B cell (primary cell): ENCODE measurements at regions of chr7 and their contacts with region 1.

Region 1: DNA sequence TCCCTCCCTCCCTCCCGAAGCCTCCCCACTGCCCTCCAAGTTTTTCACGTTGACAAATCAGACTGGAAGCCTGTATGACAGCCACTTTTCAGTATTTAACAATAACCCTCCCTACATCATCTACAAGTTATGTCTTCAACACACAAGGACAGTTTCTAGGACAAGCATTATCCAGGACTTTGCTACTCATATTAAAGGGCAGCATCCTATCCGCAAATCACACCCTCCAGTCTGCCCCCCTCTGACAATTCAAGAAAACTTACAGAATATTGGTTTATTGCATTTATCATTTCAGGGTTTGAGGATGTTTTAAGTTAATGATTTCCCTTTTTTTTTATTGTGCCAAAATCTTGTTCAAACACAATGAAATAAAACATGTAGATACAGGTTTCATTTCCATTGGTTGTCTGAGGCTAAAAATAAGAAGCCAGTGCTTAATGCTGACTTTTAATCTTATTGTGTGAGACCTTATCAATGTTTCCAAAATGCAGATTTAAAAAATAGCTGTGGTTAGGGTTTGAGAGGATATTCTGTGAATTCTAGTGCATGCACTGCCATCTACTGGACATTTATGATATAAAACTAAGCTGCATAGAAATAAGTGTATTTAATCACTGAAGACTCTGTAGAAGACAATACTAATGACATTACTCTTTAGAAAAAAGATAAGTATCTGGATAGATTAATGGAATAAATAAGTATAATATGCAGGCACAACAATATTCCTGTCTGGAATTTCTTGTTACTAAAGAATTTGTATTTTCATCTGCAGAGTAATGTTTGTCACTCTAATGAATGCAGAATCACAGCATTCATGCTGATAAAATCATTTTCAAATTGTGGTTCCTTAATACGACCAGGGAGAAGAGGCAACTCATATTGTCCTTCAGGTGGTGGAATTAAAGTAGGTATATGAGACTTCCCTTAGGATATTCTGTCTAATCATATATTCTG is 64.1 kb downstream of the CAV1 start:
- DNase-seq: peak; percentile 66
- ATAC-seq: peak; percentile 60
- H3K4me3 ChIP-seq: no peak overlapping the region
- H3K4me3 Mint-ChIP-seq: no peak overlapping the region
- H3K27ac ChIP-seq: no peak overlapping the region
- H3K27ac Mint-ChIP-seq: no peak overlapping the region
- H3K4me1 ChIP-seq: peaks cover 12 to 19% of the 10 kb centered on the region in 2 donors
- H3K4me1 Mint-ChIP-seq: peaks cover 19% of the 10 kb centered on the region
- H3K27me3 ChIP-seq: peaks cover 0 to 18% (median 16%) of the 10 kb centered on the region in 4 experiments
- H3K27me3 Mint-ChIP-seq: peaks cover 19% of the 10 kb centered on the region
- CTCF ChIP-seq: peak; percentile 91

Region 2: GRCh38 chr7:116173051-116174028 is 415.6 kb before region 1 on chr7:
- CTCF ChIA-PET with region 1: interaction called, 64 read pairs
- POLR2A ChIA-PET with region 1: no interaction called
- intact Hi-C with region 1: loop called (anchors 1 kb)
- DNase-seq: peak; percentile 74
- ATAC-seq: peak; percentile 61
- H3K4me3 ChIP-seq: no peak overlapping the region
- H3K4me3 Mint-ChIP-seq: no peak overlapping the region
- H3K27ac ChIP-seq: no peak overlapping the region
- H3K27ac Mint-ChIP-seq: no peak overlapping the region
- H3K4me1 ChIP-seq: no peaks in the 10 kb centered on the region
- H3K4me1 Mint-ChIP-seq: peaks cover 2% of the 10 kb centered on the region
- H3K27me3 ChIP-seq: no peaks in the 10 kb centered on the region
- H3K27me3 Mint-ChIP-seq: no peaks in the 10 kb centered on the region
- CTCF ChIP-seq: peak; percentile 82

Region 3: DNA sequence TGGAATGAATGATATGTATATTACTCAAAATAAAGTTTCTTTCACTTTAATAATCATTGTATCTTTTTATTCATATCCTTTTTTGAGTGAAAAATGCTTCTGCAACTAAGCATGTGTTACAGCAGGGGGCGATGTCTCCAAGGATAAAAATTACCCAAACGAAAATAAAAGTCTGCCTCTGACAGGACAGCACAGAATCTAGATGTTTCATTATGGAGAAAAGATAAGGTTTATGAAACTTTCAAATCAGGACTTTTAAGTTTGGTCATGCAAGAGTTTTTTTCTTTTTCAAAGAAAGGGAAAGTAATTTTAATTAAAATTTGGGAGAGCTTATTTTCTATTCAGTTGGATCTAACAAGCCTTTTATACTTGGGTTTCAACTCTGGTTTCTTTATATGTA is 330.2 kb before region 1 on chr7:
- CTCF ChIA-PET with region 1: interaction called, 180 read pairs
- POLR2A ChIA-PET with region 1: no interaction called
- intact Hi-C with region 1: loop called (anchors 1 kb)
- DNase-seq: peak; percentile 63
- ATAC-seq: peak; percentile 51
- H3K4me3 ChIP-seq: no peak overlapping the region
- H3K4me3 Mint-ChIP-seq: no peak overlapping the region
- H3K27ac ChIP-seq: no peak overlapping the region
- H3K27ac Mint-ChIP-seq: no peak overlapping the region
- H3K4me1 ChIP-seq: no peaks in the 10 kb centered on the region
- H3K4me1 Mint-ChIP-seq: peaks cover 2% of the 10 kb centered on the region
- H3K27me3 ChIP-seq: no peaks in the 10 kb centered on the region
- H3K27me3 Mint-ChIP-seq: no peaks in the 10 kb centered on the region
- CTCF ChIP-seq: peak; percentile 86

Region 4: GRCh38 chr7:116277070-116277469 is 311.8 kb before region 1 on chr7:
- CTCF ChIA-PET with region 1: no interaction called
- POLR2A ChIA-PET with region 1: no interaction called
- intact Hi-C with region 1: no loop called
- DNase-seq: no peak
- ATAC-seq: no peak
- H3K4me3 ChIP-seq: no peak overlapping the region
- H3K4me3 Mint-ChIP-seq: no peak overlapping the region
- H3K27ac ChIP-seq: no peak overlapping the region
- H3K27ac Mint-ChIP-seq: no peak overlapping the region
- H3K4me1 ChIP-seq: no peaks in the 10 kb centered on the region
- H3K4me1 Mint-ChIP-seq: no peaks in the 10 kb centered on the region
- H3K27me3 ChIP-seq: no peaks in the 10 kb centered on the region
- H3K27me3 Mint-ChIP-seq: peaks cover 8% of the 10 kb centered on the region
- CTCF ChIP-seq: no peak

Region 5: GRCh38 chr7:116576350-116577319 is 12.3 kb before region 1 on chr7:
- CTCF ChIA-PET with region 1: interaction called, 30 read pairs
- POLR2A ChIA-PET with region 1: no interaction called
- intact Hi-C with region 1: no loop called
- DNase-seq: no peak
- ATAC-seq: no peak
- H3K4me3 ChIP-seq: no peak overlapping the region
- H3K4me3 Mint-ChIP-seq: no peak overlapping the region
- H3K27ac ChIP-seq: no peak overlapping the region
- H3K27ac Mint-ChIP-seq: no peak overlapping the region
- H3K4me1 ChIP-seq: peaks cover 12 to 14% of the 10 kb centered on the region in 2 donors
- H3K4me1 Mint-ChIP-seq: peaks cover 16% of the 10 kb centered on the region
- H3K27me3 ChIP-seq: peaks cover 0 to 2% (median 0%) of the 10 kb centered on the region in 4 experiments
- H3K27me3 Mint-ChIP-seq: peaks cover 4% of the 10 kb centered on the region
- CTCF ChIP-seq: no peak

Region 6: GRCh38 chr7:116671681-116672595 is 83.0 kb after region 1 on chr7 and contains the start of gene MET:
- CTCF ChIA-PET with region 1: interaction called, 17 read pairs
- POLR2A ChIA-PET with region 1: no interaction called
- intact Hi-C with region 1: loop called (anchors 5 kb)
- DNase-seq: peak; percentile 71
- ATAC-seq: peak; percentile 83
- H3K4me3 ChIP-seq: peak within 1 kb of the TSS; percentile 28 to 54 (median 39)
- H3K4me3 Mint-ChIP-seq: peak within 1 kb of the TSS; percentile 82
- H3K27ac ChIP-seq: no peak within 1 kb of the TSS
- H3K27ac Mint-ChIP-seq: no peak within 1 kb of the TSS
- H3K4me1 ChIP-seq: peaks cover 14 to 15% of the 10 kb centered on the region in 2 donors
- H3K4me1 Mint-ChIP-seq: peaks cover 18% of the 10 kb centered on the region
- H3K27me3 ChIP-seq: peaks cover 0 to 52% (median 47%) of the 10 kb centered on the region in 4 experiments
- H3K27me3 Mint-ChIP-seq: peaks cover 69% of the 10 kb centered on the region
- CTCF ChIP-seq: no peak
- total RNA-seq, gene MET: 0.59 and 1.9 TPM in 2 replicates

Region 7: DNA sequence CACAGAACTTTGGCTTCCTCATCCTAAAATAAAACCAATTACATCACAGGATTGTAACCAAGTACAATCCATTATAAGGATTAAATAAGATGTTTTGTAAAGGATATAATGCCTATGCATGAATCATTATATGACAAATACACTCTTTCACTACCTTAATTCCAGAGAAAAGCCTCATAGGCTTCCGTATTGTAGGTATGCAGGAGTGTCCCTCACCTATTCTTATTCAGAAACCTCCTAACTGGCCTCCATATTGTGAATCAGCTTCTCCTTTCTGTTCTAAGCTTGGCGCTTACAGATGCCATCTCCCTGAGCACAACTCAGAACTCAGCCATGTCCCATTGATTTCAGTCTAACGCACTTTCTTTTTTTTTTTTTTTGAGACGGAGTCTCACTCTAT is 203.9 kb after region 1 on chr7:
- CTCF ChIA-PET with region 1: interaction called, 10 read pairs
- POLR2A ChIA-PET with region 1: no interaction called
- intact Hi-C with region 1: no loop called
- DNase-seq: no peak
- ATAC-seq: no peak
- H3K4me3 ChIP-seq: no peak overlapping the region
- H3K4me3 Mint-ChIP-seq: no peak overlapping the region
- H3K27ac ChIP-seq: no peak overlapping the region
- H3K27ac Mint-ChIP-seq: no peak overlapping the region
- H3K4me1 ChIP-seq: no peaks in the 10 kb centered on the region
- H3K4me1 Mint-ChIP-seq: no peaks in the 10 kb centered on the region
- H3K27me3 ChIP-seq: no peaks in the 10 kb centered on the region
- H3K27me3 Mint-ChIP-seq: peaks cover 9% of the 10 kb centered on the region
- CTCF ChIP-seq: no peak